Posterior vena cava (tissue), 2 donors: ENCODE measurements at regions of chr12 and their contacts with region 1.

Region 1: GRCh38 chr12:105382771-105383622 is 52.5 kb downstream of the C12orf75 start:
- DNase-seq: no peak

Region 2: GRCh38 chr12:105226219-105226618 is 156.8 kb before region 1 on chr12:
- intact Hi-C with region 1: loop called in 1 of 2 experiments (anchors 10 kb)
- DNase-seq: peak; percentile 88

Region 3: GRCh38 chr12:105474672-105475071 is 91.7 kb after region 1 on chr12:
- intact Hi-C with region 1: no loop called
- DNase-seq: no peak

Region 4: GRCh38 chr12:105611340-105611739 is 228.3 kb after region 1 on chr12:
- intact Hi-C with region 1: no loop called
- DNase-seq: no peak